ENCODE measurements at regions of chr15 and their contacts with region 1.

Region 1: GRCh38 chr15:69141286-69141701 is 19.1 kb upstream of the GLCE start:
- DNase-seq: no peak
- H3K4me3 ChIP-seq: no peak overlapping the region
- H3K27ac ChIP-seq: no peak overlapping the region
- H3K4me1 ChIP-seq: peaks cover 0 to 28% (median 17%) of the 10 kb centered on the region in 4 donors
- H3K27me3 ChIP-seq: no peaks in the 10 kb centered on the region
- CTCF ChIP-seq: no peak
- EP300 ChIP-seq: no peak
- POLR2A ChIP-seq: no peak

Region 2: GRCh38 chr15:69081310-69082004 is 59.8 kb before region 1 on chr15:
- in situ Hi-C with region 1: loop called in 1 of 4 experiments (anchors 10 kb)
- intact Hi-C with region 1: no loop called
- DNase-seq: no peak
- H3K4me3 ChIP-seq: no peak overlapping the region
- H3K27ac ChIP-seq: peak overlapping the region; percentile 41 to 64 (median 59)
- H3K4me1 ChIP-seq: peaks cover 0 to 16% (median 0%) of the 10 kb centered on the region in 4 donors
- H3K27me3 ChIP-seq: no peaks in the 10 kb centered on the region
- CTCF ChIP-seq: no peak
- EP300 ChIP-seq: no peak
- POLR2A ChIP-seq: no peak